Gastrocnemius medialis (tissue), 4 donors: ENCODE measurements at regions of chr3 and their contacts with region 1.

Region 1: GRCh38 chr3:157532529-157533297 is 29.5 kb upstream of the VEPH1 start:
- DNase-seq: no peak
- ATAC-seq: peak; percentile 75 to 81
- H3K4me3 ChIP-seq: no peak overlapping the region
- H3K27ac ChIP-seq: no peak overlapping the region
- H3K4me1 ChIP-seq: no peaks in the 10 kb centered on the region
- H3K27me3 ChIP-seq: no peaks in the 10 kb centered on the region
- CTCF ChIP-seq: peak; percentile 34 to 69 (median 57)
- POLR2A ChIP-seq: no peak

Region 2: DNA sequence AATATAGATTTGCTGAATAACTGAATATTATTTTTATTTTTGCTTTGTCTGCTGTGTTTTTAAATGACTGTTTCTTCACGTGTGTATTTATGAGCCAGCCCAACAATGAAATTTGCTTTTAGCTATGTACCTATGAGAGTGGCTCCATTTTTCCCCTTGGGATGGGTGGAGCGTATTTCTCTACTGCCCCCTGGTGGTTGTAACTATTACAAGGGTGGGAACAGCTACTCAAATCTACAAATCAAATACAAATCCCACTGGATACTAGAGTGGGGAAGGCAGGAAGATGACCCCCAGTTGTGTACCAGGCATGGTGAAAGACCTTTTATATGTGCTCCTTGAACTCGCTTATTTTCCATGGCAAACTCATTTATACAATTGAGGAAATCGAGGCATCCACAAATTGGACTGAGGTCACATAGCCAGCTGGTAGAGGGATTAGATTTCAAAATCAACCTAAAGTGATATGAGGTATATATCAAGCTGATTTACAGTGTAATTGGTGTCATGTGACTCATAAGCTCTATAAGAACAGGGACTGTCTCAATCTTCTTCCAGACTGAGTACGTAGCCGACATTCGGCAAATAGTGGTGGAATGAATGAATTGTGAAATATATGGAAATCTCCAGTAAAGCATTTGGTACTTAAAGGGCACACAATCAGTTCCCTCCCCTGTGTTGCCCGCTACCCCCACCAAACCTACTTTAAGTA is 40.0 kb after region 1 on chr3:
- in situ Hi-C with region 1: no loop called
- intact Hi-C with region 1: loop called (anchors 1 kb)
- DNase-seq: no peak
- ATAC-seq: peak in 1 of 2 donors; percentile 56
- H3K4me3 ChIP-seq: no peak overlapping the region
- H3K27ac ChIP-seq: no peak overlapping the region
- H3K4me1 ChIP-seq: no peaks in the 10 kb centered on the region
- H3K27me3 ChIP-seq: no peaks in the 10 kb centered on the region
- CTCF ChIP-seq: peak; percentile 47 to 72 (median 60)
- POLR2A ChIP-seq: no peak